Heart right ventricle (tissue), 16 donors: ENCODE measurements at regions of chr16 and their contacts with region 1.

Region 1: GRCh38 chr16:10039220-10040096 is 142.8 kb downstream of the GRIN2A start:
- DNase-seq: peak; percentile 17 to 18
- ATAC-seq: peak in 3 of 8 donors; percentile 66 to 87 (median 70)
- H3K4me3 ChIP-seq: peak overlapping the region in 9 of 10 donors; percentile 5 to 41 (median 18)
- H3K27ac ChIP-seq: no peak overlapping the region
- H3K4me1 ChIP-seq: peaks cover 0 to 8% (median 0%) of the 10 kb centered on the region in 9 donors
- H3K27me3 ChIP-seq: peaks cover 0 to 38% (median 20%) of the 10 kb centered on the region in 7 donors
- CTCF ChIP-seq: peak in 8 of 9 donors; percentile 6 to 54 (median 32)

Region 2: GRCh38 chr16:9647981-9648712 is 391.3 kb before region 1 on chr16:
- intact Hi-C with region 1: loop called in 1 of 10 experiments (anchors 10 kb)
- DNase-seq: peak in 1 of 2 donors; percentile 13
- ATAC-seq: peak in 5 of 8 donors; percentile 35 to 94 (median 48)
- H3K4me3 ChIP-seq: no peak overlapping the region
- H3K27ac ChIP-seq: no peak overlapping the region
- H3K4me1 ChIP-seq: no peaks in the 10 kb centered on the region
- H3K27me3 ChIP-seq: peaks cover 0 to 9% (median 0%) of the 10 kb centered on the region in 7 donors
- CTCF ChIP-seq: peak; percentile 60 to 80 (median 68)

Region 3: DNA sequence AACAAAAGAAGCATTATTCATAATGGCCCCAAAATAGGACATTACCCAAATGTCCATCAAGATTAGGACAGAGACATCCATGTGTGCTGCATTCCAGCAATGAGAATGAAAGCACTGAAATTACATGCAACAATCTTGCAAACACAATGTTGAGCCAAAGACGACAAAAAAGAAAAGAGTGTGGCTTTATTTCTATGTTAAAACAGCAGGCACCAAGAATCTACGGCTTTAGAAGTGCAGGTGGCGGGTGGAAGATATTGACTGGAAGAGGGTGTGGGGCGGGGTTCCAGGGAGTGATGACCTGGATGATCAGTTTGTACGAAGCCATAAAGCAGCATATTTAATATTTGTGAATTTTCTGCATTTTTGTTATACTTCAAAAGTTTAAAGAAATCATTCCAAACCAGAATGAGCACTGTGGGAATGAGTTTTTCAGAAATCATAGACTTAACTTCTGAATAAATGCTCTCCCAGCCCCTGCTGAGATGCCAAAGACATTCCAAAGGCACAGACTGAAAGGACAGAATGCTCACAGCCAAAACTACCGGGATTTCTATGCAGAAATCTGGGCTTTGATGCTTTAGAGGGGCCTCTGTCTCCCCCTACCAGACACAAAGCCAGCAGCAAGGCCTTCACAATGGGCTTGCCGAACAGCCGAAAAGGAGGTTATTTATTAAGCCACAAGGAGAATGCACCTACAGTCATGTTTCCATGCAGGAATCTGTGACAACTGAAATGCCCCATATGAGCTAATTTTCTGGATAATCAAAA is 218.8 kb before region 1 on chr16:
- intact Hi-C with region 1: loop called in 1 of 10 experiments (anchors 10 kb)
- DNase-seq: no peak
- ATAC-seq: no peak
- H3K4me3 ChIP-seq: no peak overlapping the region
- H3K27ac ChIP-seq: no peak overlapping the region
- H3K4me1 ChIP-seq: no peaks in the 10 kb centered on the region
- H3K27me3 ChIP-seq: peaks cover 0 to 8% (median 3%) of the 10 kb centered on the region in 7 donors
- CTCF ChIP-seq: peak in 1 of 9 donors; percentile 8

Region 4: GRCh38 chr16:10103118-10103517 is 63.7 kb after region 1 on chr16:
- intact Hi-C with region 1: no loop called
- DNase-seq: no peak
- ATAC-seq: no peak
- H3K4me3 ChIP-seq: no peak overlapping the region
- H3K27ac ChIP-seq: no peak overlapping the region
- H3K4me1 ChIP-seq: no peaks in the 10 kb centered on the region
- H3K27me3 ChIP-seq: peaks cover 0 to 34% (median 7%) of the 10 kb centered on the region in 7 donors
- CTCF ChIP-seq: no peak

Region 5: GRCh38 chr16:10136916-10137315 is 97.5 kb after region 1 on chr16:
- intact Hi-C with region 1: loop called in 1 of 10 experiments (anchors 10 kb)
- DNase-seq: no peak
- ATAC-seq: no peak
- H3K4me3 ChIP-seq: no peak overlapping the region
- H3K27ac ChIP-seq: no peak overlapping the region
- H3K4me1 ChIP-seq: no peaks in the 10 kb centered on the region
- H3K27me3 ChIP-seq: peaks cover 0 to 6% (median 0%) of the 10 kb centered on the region in 7 donors
- CTCF ChIP-seq: no peak